ENCODE measurements at regions of chr17 and their contacts with region 1.

Region 1: DNA sequence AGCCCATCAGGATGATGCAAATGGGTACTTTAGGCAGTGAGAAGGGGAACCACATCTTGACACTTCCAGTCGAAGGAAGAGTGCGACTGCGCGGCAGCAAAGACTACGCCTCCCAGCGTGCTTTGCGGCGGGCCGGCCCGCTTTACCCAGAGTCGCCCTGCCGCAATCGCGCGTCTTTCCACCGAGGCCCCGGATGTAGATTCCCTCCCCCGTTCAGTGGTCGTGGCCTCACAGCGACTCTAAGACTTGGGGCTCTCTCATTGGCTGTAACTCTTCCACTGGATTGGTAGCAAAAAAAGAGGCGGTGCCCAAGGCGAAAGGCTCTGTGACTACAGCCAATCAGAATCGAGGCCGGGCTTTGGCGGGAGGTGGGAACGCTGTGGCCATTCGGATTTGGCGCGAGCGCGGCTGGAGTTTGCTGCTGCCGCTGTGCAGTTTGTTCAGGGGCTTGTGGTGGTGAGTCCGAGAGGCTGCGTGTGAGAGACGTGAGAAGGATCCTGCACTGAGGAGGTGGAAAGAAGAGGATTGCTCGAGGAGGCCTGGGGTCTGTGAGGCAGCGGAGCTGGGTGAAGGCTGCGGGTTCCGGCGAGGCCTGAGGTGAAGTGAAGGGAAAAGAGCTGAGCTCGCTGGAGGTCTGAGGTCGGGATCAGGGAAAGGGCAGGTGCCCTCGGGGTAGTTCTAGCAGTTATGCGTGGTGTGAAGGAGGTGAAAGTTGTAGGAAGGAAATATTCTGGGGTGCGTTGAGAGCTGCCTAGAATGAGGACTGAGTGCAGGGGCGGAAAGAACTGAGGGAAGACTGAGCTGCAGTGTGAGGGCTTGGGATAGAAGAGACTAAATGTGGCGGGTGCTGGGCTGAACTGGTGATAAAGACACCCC is at the start of gene CDC6:
- DNase-seq: peak; percentile 100
- H3K4me3 Mint-ChIP-seq: peak within 1 kb of the TSS; percentile 99
- H3K27ac Mint-ChIP-seq: peak within 1 kb of the TSS; percentile 94
- H3K4me1 Mint-ChIP-seq: peaks cover 56% of the 10 kb centered on the region
- H3K27me3 Mint-ChIP-seq: no peaks in the 10 kb centered on the region
- total RNA-seq, gene CDC6: 95.6 to 95.7 TPM

Region 2: DNA sequence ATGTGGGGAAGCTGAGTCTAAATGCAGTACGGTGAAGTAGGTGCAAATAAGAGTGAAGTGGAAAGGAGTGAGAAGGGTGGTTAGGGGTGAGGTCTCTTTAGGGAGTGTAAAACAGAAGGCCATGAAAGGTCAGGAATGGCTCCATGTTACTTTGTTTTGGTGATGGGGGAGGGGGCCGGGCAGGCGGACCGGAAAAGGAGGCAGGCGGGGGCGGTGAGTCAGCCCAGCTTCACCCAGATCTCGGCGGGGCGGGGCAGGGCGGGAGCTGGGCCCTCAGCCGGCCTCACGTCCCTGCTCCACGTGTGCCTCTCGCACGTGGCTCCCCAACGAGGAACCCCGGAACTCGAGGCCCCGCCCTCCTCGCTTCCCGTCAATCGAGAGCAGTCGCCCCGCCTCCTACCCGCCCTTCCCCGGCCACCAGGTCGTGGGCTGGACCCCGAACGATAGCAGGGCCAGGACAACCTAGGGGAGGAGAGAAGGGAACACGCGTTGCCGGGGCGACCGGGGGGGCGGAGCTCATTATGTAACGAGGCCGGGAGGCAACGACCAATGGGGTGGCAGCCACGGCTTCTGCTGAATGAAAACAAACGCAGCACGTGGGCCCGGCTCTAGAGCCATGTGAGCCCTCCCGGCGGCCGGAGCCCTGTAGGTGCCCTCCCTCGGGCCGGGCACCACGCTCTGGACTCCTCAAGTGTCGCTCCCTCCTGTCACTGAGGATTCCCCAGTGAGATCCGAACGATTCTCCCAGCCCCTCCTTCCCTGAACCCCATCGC is 188.7 kb before region 1 on chr17:
- CTCF ChIA-PET with region 1: no interaction called
- POLR2A ChIA-PET with region 1: no interaction called
- intact Hi-C with region 1: loop called (anchors 1 kb)
- DNase-seq: peak; percentile 99
- H3K4me3 Mint-ChIP-seq: peak overlapping the region; percentile 88
- H3K27ac Mint-ChIP-seq: peak overlapping the region; percentile 91
- H3K4me1 Mint-ChIP-seq: peaks cover 85% of the 10 kb centered on the region
- H3K27me3 Mint-ChIP-seq: no peaks in the 10 kb centered on the region

Region 3: GRCh38 chr17:40203131-40203530 is 84.6 kb before region 1 on chr17:
- CTCF ChIA-PET with region 1: interaction called, 25 read pairs
- POLR2A ChIA-PET with region 1: no interaction called
- intact Hi-C with region 1: loop called (anchors 1 kb)
- DNase-seq: no peak
- H3K4me3 Mint-ChIP-seq: no peak overlapping the region
- H3K27ac Mint-ChIP-seq: no peak overlapping the region
- H3K4me1 Mint-ChIP-seq: no peaks in the 10 kb centered on the region
- H3K27me3 Mint-ChIP-seq: peaks cover 2% of the 10 kb centered on the region

Region 4: DNA sequence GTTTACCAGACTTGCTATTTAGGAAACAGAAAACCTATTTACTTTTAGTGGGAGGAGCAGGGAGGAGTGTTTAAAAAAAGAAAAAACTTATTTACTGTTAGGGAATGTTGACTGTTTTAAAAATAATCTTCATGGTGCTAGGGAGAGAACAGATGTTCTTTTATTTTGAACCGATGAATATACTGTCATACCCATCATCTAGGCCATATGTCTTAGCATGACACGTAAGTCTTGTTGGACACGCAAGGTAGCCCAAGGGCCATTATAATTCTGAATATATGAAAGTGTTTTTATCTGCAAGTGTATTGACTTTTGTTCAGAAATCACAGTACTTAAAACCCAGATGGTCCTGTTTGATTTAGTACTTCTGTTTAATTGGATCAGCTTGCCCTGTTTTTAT is 57.1 kb before region 1 on chr17:
- CTCF ChIA-PET with region 1: no interaction called
- POLR2A ChIA-PET with region 1: interaction called, 4 read pairs
- intact Hi-C with region 1: loop called (anchors 5 kb)
- DNase-seq: no peak
- H3K4me3 Mint-ChIP-seq: no peak overlapping the region
- H3K27ac Mint-ChIP-seq: no peak overlapping the region
- H3K4me1 Mint-ChIP-seq: peaks cover 18% of the 10 kb centered on the region
- H3K27me3 Mint-ChIP-seq: no peaks in the 10 kb centered on the region

Region 5: DNA sequence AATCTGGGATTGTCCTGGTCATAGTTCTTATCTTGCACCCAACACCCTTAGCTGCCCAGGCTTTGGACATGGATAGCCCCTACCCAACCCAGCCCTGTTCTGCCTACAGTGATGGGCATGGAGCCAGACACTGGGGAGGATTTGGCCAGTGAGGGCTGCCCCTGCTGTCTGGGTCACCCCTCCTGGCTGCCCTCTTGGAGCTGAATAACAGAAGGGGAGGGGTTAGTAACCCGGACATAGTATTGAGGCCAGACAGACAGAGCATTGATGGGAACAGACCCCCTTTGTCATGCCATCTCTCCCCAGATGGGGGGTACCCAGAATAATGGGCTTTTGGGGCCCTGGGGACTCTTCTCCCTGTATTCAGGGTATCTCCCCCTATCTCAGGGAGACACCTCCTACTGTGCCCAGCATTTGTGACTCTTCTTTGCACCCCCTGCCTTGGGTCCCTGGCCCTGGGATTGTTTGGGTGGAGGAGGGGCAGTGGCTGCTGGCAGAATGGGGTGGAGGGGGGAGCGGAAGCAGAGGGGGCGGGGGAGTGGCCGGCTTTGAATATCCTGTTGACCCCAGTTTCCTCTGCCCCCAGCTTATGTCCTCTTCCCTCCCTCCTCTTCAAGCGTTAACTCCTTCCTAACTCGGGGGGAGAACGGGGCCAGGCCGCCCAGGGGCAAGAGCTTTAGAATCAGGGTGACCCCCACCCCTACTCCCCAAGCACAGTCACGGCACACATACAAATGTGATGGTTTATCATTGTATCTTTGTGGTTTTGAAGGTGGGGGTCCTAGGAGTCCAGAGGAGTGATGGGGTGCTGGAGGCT is 59.8 kb after region 1 on chr17:
- CTCF ChIA-PET with region 1: no interaction called
- POLR2A ChIA-PET with region 1: no interaction called
- intact Hi-C with region 1: no loop called
- DNase-seq: no peak
- H3K4me3 Mint-ChIP-seq: no peak overlapping the region
- H3K27ac Mint-ChIP-seq: peak overlapping the region; percentile 23
- H3K4me1 Mint-ChIP-seq: peaks cover 49% of the 10 kb centered on the region
- H3K27me3 Mint-ChIP-seq: no peaks in the 10 kb centered on the region